ENCODE measurements at regions of chr17 and their contacts with region 1.

Region 1: GRCh38 chr17:50055426-50056230 is at the start of gene ITGA3:
- DNase-seq: peak; percentile 93
- H3K4me3 ChIP-seq: peak within 1 kb of the TSS; percentile 90 to 91
- H3K27ac ChIP-seq: peak within 1 kb of the TSS; percentile 90 to 100
- H3K4me1 ChIP-seq: peaks cover 64 to 65% of the 10 kb centered on the region in 2 experiments
- H3K27me3 ChIP-seq: no peaks in the 10 kb centered on the region
- CTCF ChIP-seq: no peak; the same call in 1 of the 2 replicates
- EP300 ChIP-seq: peak in 1 of 2 experiments; percentile 66; a peak in 1 of 4 replicates
- RAD21 ChIP-seq: peak; percentile 2; the same call in 1 of the 2 replicates
- polyA plus RNA-seq, gene ITGA3: 543 and 766 TPM in 2 replicates

Region 2: GRCh38 chr17:50009282-50009681 is 46.3 kb before region 1 on chr17:
- CTCF ChIA-PET with region 1: no interaction called
- POLR2A ChIA-PET with region 1: no interaction called
- DNase-seq: no peak
- H3K4me3 ChIP-seq: no peak overlapping the region
- H3K27ac ChIP-seq: no peak overlapping the region
- H3K4me1 ChIP-seq: no peaks in the 10 kb centered on the region
- H3K27me3 ChIP-seq: peaks cover 24% of the 10 kb centered on the region; the same call in 1 of the 2 replicates
- CTCF ChIP-seq: no peak
- EP300 ChIP-seq: no peak
- RAD21 ChIP-seq: no peak

Region 3: GRCh38 chr17:50071692-50072486 is 16.3 kb after region 1 on chr17:
- CTCF ChIA-PET with region 1: interaction called, 30 read pairs
- POLR2A ChIA-PET with region 1: interaction called, 3 read pairs
- DNase-seq: no peak
- H3K4me3 ChIP-seq: no peak overlapping the region
- H3K27ac ChIP-seq: peak overlapping the region in 1 of 2 experiments; percentile 53; a peak in 1 of 4 replicates
- H3K4me1 ChIP-seq: peaks cover 0 to 2% of the 10 kb centered on the region in 2 experiments; a peak in 2 of 4 replicates
- H3K27me3 ChIP-seq: no peaks in the 10 kb centered on the region
- CTCF ChIP-seq: no peak
- EP300 ChIP-seq: no peak
- RAD21 ChIP-seq: no peak

Region 4: DNA sequence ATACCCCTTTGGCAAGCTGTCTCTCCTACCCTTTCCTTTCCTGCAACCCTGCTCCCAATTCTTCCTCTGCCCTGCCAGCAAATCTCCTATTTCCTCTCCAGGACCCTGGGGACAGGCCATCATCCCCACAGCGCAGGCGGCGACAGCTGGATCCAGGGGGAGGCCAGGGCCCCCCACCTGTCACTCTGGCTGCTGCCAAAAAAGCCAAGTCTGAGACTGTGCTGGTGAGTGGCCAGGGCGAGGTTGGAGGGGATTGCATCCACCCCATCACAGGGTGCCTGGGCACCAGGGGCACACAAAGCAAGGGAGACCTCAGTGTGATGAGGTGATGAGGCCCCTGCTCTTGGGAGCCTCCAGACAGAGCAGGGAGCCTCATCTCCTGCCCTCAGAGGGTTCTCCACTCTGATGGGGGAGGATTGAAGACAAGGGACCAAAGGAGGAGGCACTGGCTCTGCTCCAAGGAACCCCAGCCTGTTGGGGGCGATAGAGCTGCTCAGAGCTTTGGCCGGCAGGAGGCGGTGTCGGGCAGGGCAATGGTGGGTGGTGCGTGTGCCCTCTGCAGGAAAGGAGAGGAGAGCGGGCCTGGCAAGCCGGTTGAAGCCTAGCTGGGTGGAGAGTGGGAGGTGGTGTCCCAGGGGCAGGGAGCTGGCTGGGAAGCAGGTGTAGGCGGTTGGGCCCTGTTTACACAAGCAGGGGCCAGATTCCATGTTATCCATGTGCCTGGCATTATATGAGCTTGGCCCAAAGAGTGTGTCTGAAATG is 23.9 kb after region 1 on chr17:
- CTCF ChIA-PET with region 1: interaction called, 17 read pairs
- POLR2A ChIA-PET with region 1: interaction called, 3 read pairs
- DNase-seq: no peak
- H3K4me3 ChIP-seq: no peak overlapping the region
- H3K27ac ChIP-seq: peak overlapping the region in 1 of 2 experiments; percentile 50; a peak in 1 of 4 replicates
- H3K4me1 ChIP-seq: no peaks in the 10 kb centered on the region
- H3K27me3 ChIP-seq: no peaks in the 10 kb centered on the region
- CTCF ChIP-seq: peak; percentile 71
- EP300 ChIP-seq: no peak
- RAD21 ChIP-seq: no peak; the same call in 1 of the 2 replicates

Region 5: GRCh38 chr17:50279181-50279526 is 223.5 kb after region 1 on chr17:
- CTCF ChIA-PET with region 1: no interaction called
- POLR2A ChIA-PET with region 1: no interaction called
- DNase-seq: no peak
- H3K4me3 ChIP-seq: no peak overlapping the region
- H3K27ac ChIP-seq: peak overlapping the region; percentile 20; a peak in 2 of 4 replicates
- H3K4me1 ChIP-seq: peaks cover 7 to 26% of the 10 kb centered on the region in 2 experiments; a peak in 3 of 4 replicates
- H3K27me3 ChIP-seq: no peaks in the 10 kb centered on the region
- CTCF ChIP-seq: no peak
- EP300 ChIP-seq: no peak; a peak in 1 of 4 replicates
- RAD21 ChIP-seq: no peak